ENCODE measurements at regions of chr14 and their contacts with region 1.

Region 1: DNA sequence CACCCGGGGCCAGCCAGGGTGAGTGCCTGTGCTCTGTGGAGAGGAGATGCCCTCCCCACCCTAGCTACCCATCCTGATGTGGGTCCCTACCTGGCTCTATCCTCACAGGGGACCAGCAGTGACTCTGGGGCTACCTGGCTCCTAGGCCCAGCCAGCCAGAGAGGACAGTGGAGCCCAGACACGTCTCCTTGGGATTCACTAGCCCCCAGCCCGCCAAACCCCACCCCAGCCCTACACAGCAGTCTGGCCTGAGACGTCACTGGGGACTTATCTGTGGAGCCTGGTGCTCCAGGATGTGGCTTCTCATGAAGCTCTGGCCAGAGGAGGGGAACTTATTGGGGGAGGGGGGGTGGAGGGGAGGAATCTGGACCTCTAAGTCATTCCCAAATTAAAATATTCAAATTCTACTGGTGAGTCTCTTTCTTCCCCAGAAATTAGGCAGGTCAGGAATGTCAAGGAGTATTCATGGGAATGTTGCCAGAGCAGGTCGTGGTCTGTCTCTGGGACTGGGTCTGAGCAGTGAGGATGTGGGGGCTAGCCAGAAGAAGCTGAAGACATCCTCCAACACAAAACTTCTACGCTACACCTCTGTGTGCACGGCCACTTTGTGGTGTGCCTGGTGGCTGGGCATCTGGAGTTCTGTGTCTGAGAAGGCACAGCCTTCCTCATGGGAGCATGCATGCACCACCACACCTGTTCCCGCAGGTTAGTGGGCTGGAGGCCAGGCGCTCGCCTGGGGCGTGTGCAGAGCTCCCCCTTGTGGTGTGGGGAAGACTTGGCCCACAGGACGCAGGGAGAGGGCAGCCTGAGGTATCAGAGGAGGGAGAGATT is 2.7 kb downstream of the CMTM5 start:
- DNase-seq: peak; percentile 71
- H3K4me3 ChIP-seq: no peak overlapping the region
- H3K27ac ChIP-seq: no peak overlapping the region
- H3K4me1 ChIP-seq: no peaks in the 10 kb centered on the region
- H3K27me3 ChIP-seq: no peaks in the 10 kb centered on the region
- CTCF ChIP-seq: peak; percentile 95

Region 2: GRCh38 chr14:23327947-23328744 is 51.4 kb before region 1 on chr14:
- intact Hi-C with region 1: loop called (anchors 5 kb)
- DNase-seq: peak; percentile 79
- H3K4me3 ChIP-seq: no peak overlapping the region
- H3K27ac ChIP-seq: no peak overlapping the region
- H3K4me1 ChIP-seq: no peaks in the 10 kb centered on the region
- H3K27me3 ChIP-seq: no peaks in the 10 kb centered on the region
- CTCF ChIP-seq: peak; percentile 90

Region 3: GRCh38 chr14:23483236-23483854 is 103.8 kb after region 1 on chr14:
- intact Hi-C with region 1: no loop called
- DNase-seq: no peak
- H3K4me3 ChIP-seq: no peak overlapping the region
- H3K27ac ChIP-seq: no peak overlapping the region
- H3K4me1 ChIP-seq: no peaks in the 10 kb centered on the region
- H3K27me3 ChIP-seq: no peaks in the 10 kb centered on the region
- CTCF ChIP-seq: no peak